Transverse colon (tissue), 4 donors: ENCODE measurements at regions of chr3 and their contacts with region 1.

Region 1: GRCh38 chr3:43503067-43503728 is 118.6 kb downstream of the ANO10 start:
- DNase-seq: no peak
- H3K4me3 ChIP-seq: no peak overlapping the region
- H3K27ac ChIP-seq: no peak overlapping the region
- H3K4me1 ChIP-seq: no peaks in the 10 kb centered on the region
- H3K27me3 ChIP-seq: no peaks in the 10 kb centered on the region
- CTCF ChIP-seq: peak; percentile 43 to 56 (median 49)
- EP300 ChIP-seq: no peak
- POLR2A ChIP-seq: no peak

Region 2: DNA sequence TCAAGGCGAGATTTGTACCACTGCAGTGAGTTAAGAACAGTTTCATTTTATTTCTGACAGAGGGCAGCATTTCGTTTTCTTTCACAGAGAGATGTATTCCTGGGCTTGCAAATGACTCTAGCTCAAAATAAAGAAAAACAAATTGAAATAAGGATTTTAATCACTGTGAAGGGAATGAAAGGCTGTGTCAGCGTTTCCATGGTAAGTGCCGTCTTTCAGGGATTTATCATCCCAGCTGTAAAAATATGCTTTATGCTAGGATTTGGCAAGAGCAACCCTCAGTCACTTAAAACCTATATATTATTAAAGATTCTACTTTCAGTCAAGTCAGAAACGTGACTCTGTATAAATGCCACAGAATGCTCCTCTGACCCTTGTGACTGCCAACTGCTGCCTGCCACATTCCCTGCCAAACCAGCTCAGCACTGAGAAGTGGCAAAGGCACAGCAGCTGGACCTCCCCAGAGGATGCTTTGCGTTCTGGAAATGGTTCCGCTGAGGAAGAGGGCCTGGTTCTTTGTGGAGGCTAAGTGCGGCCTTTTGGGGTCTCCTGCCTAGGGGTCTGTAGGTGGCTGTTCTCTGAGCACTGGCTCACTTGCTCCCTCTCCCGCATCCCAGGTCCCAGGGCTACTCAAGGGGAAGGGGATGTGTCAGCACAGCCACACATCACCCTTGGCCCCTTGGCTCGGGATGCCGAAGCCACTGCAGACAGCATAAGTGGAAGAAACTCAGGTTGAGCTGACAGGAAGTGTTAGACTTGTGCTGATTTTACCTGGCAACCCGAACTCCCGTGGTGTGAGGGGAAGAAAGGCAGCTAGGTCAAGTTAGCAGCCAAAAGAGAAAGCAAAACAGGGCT is 340.7 kb before region 1 on chr3:
- in situ Hi-C with region 1: loop called in 3 of 4 experiments (anchors 10 to 25 kb)
- intact Hi-C with region 1: no loop called
- DNase-seq: no peak
- H3K4me3 ChIP-seq: no peak overlapping the region
- H3K27ac ChIP-seq: peak overlapping the region in 2 of 4 donors; percentile 13 to 51
- H3K4me1 ChIP-seq: peaks cover 0 to 6% (median 0%) of the 10 kb centered on the region in 4 donors
- H3K27me3 ChIP-seq: no peaks in the 10 kb centered on the region
- CTCF ChIP-seq: peak; percentile 16 to 49 (median 38)
- EP300 ChIP-seq: no peak
- POLR2A ChIP-seq: no peak

Region 3: GRCh38 chr3:43223670-43224364 is 279.4 kb before region 1 on chr3:
- in situ Hi-C with region 1: loop called in 1 of 4 experiments (anchors 10 kb)
- intact Hi-C with region 1: no loop called
- DNase-seq: no peak
- H3K4me3 ChIP-seq: no peak overlapping the region
- H3K27ac ChIP-seq: no peak overlapping the region
- H3K4me1 ChIP-seq: no peaks in the 10 kb centered on the region
- H3K27me3 ChIP-seq: no peaks in the 10 kb centered on the region
- CTCF ChIP-seq: peak; percentile 18 to 36 (median 27)
- EP300 ChIP-seq: no peak
- POLR2A ChIP-seq: no peak

Region 4: DNA sequence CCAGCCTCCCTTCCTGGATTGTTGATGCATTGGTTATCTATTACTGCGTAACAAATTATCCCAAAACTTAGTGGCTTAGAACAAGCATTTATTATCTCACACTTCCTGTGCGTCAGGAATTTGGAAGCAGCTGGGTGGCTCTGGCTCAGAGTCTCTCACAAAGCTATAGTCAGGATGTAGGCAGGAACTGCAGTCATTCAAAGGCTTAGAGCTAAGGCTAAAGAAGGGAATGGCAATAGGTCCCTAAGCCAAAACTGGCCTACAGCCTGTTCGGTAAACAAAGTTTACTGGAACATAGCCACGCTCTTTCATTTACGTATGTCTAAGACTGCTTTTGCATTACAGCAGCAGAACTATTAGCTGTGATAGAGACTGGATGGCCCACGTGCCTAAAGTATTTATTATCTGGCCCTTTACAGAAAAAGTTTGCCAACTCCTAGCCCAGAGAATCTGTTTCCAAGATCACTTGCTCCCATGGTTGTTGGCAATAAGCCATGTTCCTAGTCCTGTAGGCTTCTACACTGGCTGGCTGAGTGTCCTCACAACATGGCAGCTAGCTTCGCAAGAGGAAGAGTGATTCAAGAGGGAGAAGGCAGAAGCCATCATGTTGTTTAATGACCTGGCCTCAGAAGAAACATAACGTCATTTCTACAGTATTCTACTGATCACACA is 84.5 kb before region 1 on chr3:
- in situ Hi-C with region 1: no loop called
- intact Hi-C with region 1: no loop called
- DNase-seq: no peak
- H3K4me3 ChIP-seq: no peak overlapping the region
- H3K27ac ChIP-seq: peak overlapping the region in 2 of 4 donors; percentile 8 to 31
- H3K4me1 ChIP-seq: peaks cover 0 to 9% (median 2%) of the 10 kb centered on the region in 4 donors
- H3K27me3 ChIP-seq: no peaks in the 10 kb centered on the region
- CTCF ChIP-seq: no peak
- EP300 ChIP-seq: no peak
- POLR2A ChIP-seq: no peak